T-cell (primary cell): ENCODE measurements at regions of chr2 and their contacts with region 1.

Region 1: DNA sequence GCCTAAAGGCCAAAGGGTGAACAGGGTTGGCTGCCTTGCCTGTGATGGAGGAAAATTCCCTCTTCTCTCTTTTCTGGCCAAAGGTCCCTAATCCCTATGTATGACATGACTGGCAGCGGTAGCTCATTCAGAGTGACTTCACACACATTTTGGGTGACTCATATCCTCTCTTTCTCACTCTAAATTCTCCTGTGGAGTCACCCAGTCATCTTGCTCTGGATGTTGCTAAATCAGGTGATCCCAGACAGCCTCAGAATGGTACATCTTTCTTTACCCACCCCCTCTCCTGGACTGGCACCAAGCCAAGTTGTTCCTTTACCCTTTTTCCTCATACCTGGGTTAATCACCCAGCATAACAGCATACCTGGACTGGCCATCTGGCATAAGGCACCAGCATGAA is 77.2 kb downstream of the NEURL3 start:
- DNase-seq: no peak
- ATAC-seq: no peak
- H3K4me3 ChIP-seq: no peak overlapping the region
- H3K4me3 Mint-ChIP-seq: no peak overlapping the region
- H3K27ac ChIP-seq: no peak overlapping the region
- H3K27ac Mint-ChIP-seq: no peak overlapping the region
- H3K4me1 ChIP-seq: no peaks in the 10 kb centered on the region
- H3K4me1 Mint-ChIP-seq: peaks cover 0 to 2% (median 0%) of the 10 kb centered on the region in 3 donors
- H3K27me3 ChIP-seq: peaks cover 0 to 20% of the 10 kb centered on the region in 2 experiments
- H3K27me3 Mint-ChIP-seq: peaks cover 19 to 38% of the 10 kb centered on the region in 2 donors

Region 2: DNA sequence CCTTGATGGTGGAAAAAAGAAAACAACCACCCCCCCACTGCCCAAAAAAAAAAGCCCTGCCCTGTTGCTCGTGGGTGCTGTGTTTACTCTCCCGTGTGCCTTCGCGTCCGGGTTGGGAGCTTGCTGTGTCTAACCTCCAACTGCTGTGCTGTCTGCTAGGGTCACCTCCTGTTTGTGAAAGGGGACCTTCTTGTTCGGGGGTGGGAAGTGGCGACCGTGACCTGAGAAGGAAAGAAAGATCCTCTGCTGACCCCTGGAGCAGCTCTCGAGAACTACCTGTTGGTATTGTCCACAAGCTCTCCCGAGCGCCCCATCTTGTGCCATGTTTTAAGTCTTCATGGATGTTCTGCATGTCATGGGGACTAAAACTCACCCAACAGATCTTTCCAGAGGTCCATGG is 1374.4 kb before region 1 on chr2:
- CTCF ChIA-PET with region 1: no interaction called
- POLR2A ChIA-PET with region 1: no interaction called
- DNase-seq: peak in 2 of 35 experiments; percentile 30 to 45
- ATAC-seq: peak in 3 of 4 experiments; percentile 10 to 41 (median 35)
- H3K4me3 ChIP-seq: no peak overlapping the region
- H3K4me3 Mint-ChIP-seq: peak overlapping the region in 1 of 3 donors; percentile 54
- H3K27ac ChIP-seq: no peak overlapping the region
- H3K27ac Mint-ChIP-seq: peak overlapping the region; percentile 95 to 96
- H3K4me1 ChIP-seq: peaks cover 4 to 66% of the 10 kb centered on the region in 2 experiments
- H3K4me1 Mint-ChIP-seq: peaks cover 64 to 84% (median 71%) of the 10 kb centered on the region in 3 donors
- H3K27me3 ChIP-seq: peaks cover 0 to 9% of the 10 kb centered on the region in 2 experiments
- H3K27me3 Mint-ChIP-seq: no peaks in the 10 kb centered on the region

Region 3: GRCh38 chr2:96353032-96353561 is 74.8 kb before region 1 on chr2:
- CTCF ChIA-PET with region 1: no interaction called
- POLR2A ChIA-PET with region 1: no interaction called
- DNase-seq: no peak
- ATAC-seq: no peak
- H3K4me3 ChIP-seq: no peak overlapping the region
- H3K4me3 Mint-ChIP-seq: no peak overlapping the region
- H3K27ac ChIP-seq: no peak overlapping the region
- H3K27ac Mint-ChIP-seq: no peak overlapping the region
- H3K4me1 ChIP-seq: no peaks in the 10 kb centered on the region
- H3K4me1 Mint-ChIP-seq: no peaks in the 10 kb centered on the region
- H3K27me3 ChIP-seq: no peaks in the 10 kb centered on the region
- H3K27me3 Mint-ChIP-seq: no peaks in the 10 kb centered on the region

Region 4: DNA sequence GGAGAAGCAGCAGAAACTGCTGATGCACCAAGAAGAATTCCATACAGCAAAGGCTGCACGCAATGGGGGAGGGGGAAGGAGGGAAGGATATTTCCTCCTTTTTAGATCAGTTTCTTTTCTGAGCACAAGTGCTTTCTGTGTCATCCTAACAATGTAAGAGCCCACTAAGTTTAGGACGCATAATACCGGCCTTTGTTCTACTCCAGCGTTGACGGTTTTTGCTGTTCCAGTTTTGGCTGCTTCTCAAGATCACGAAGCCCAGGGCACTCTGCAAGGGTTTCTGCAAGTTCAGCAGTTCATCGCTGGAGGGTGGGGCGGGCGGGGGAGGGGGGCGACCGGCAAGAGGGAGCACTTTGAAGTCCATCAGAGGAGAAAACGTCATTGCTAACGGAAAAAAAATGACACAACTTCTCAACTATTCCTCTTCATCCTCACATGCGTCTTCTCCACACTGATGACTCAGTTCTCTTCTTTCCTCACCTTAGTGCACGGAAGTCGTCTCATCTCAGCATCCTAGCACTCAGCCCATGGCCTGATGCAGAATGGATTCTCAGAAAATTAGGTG is 549.8 kb after region 1 on chr2:
- CTCF ChIA-PET with region 1: interaction called in 1 of 2 experiments, 10 read pairs
- POLR2A ChIA-PET with region 1: no interaction called
- DNase-seq: peak in 2 of 35 experiments; percentile 38 to 55
- ATAC-seq: peak; percentile 60 to 88 (median 68)
- H3K4me3 ChIP-seq: no peak overlapping the region
- H3K4me3 Mint-ChIP-seq: no peak overlapping the region
- H3K27ac ChIP-seq: no peak overlapping the region
- H3K27ac Mint-ChIP-seq: peak overlapping the region; percentile 13 to 59
- H3K4me1 ChIP-seq: peaks cover 2 to 6% of the 10 kb centered on the region in 2 experiments
- H3K4me1 Mint-ChIP-seq: peaks cover 10 to 13% (median 12%) of the 10 kb centered on the region in 3 donors
- H3K27me3 ChIP-seq: peaks cover 0 to 7% of the 10 kb centered on the region in 2 experiments
- H3K27me3 Mint-ChIP-seq: no peaks in the 10 kb centered on the region